Activated naive CD4-positive, alpha-beta T cell treated with anti-CD3 and anti-CD28 coated beads for 36 hours (primary cell): ENCODE measurements at regions of chr9 and their contacts with region 1.

Region 1: GRCh38 chr9:137095664-137096517 is 9.1 kb downstream of the MAN1B1 start:
- DNase-seq: peak; percentile 95
- H3K4me3 Mint-ChIP-seq: peak overlapping the region; percentile 66
- H3K27ac Mint-ChIP-seq: peak overlapping the region; percentile 88
- H3K4me1 Mint-ChIP-seq: peaks cover 19% of the 10 kb centered on the region
- H3K27me3 Mint-ChIP-seq: no peaks in the 10 kb centered on the region

Region 2: GRCh38 chr9:137114610-137115391 is 18.9 kb after region 1 on chr9 and contains the start of gene DPP7:
- CTCF ChIA-PET with region 1: interaction called, 3 read pairs
- intact Hi-C with region 1: loop called (anchors 1 kb)
- DNase-seq: peak; percentile 74
- H3K4me3 Mint-ChIP-seq: peak within 1 kb of the TSS; percentile 73
- H3K27ac Mint-ChIP-seq: no peak within 1 kb of the TSS
- H3K4me1 Mint-ChIP-seq: peaks cover 14% of the 10 kb centered on the region
- H3K27me3 Mint-ChIP-seq: no peaks in the 10 kb centered on the region
- total RNA-seq, gene DPP7: 162 to 167 TPM